H1 (cell line): ENCODE measurements at regions of chr4 and their contacts with region 1.

Region 1: DNA sequence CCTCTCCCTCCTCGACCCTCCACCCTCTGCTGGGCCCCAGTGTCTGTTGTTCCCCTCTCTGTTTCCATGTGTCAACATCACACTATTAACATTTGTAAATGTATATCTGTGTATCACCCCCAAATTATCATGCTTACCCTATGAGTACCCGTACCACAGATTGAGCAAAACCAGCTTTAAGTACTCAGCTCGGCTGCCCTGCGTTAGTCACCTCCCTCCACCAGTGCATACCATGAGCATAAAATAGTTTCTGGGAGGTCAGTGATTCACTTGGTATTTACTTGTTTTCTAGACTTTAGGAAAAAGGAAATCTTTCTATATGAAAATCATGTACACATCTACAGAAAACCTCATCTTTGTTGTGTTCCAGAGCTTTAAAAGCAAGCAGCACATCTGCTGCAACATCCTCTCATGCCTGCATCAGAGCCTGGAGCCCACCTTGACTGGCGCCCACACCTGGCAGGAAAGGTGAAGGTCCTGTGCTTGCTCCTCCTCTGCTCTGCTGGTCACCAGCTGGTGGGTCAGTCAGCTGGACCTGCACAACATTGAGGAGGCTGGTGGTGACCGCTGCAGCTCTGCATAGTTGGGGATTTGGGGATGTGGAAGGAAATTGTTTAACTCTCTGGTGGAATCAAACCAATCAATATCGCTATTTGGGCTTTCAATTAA is 214.4 kb upstream of the KLF3 start:
- DNase-seq: no peak
- H3K4me3 ChIP-seq: no peak overlapping the region
- H3K27ac ChIP-seq: no peak overlapping the region
- H3K4me1 ChIP-seq: no peaks in the 10 kb centered on the region
- H3K27me3 ChIP-seq: no peaks in the 10 kb centered on the region
- CTCF ChIP-seq: peak; percentile 46 to 75 (median 69)
- EP300 ChIP-seq: no peak
- POLR2A ChIP-seq: no peak
- RAD21 ChIP-seq: peak; percentile 44 to 63

Region 2: DNA sequence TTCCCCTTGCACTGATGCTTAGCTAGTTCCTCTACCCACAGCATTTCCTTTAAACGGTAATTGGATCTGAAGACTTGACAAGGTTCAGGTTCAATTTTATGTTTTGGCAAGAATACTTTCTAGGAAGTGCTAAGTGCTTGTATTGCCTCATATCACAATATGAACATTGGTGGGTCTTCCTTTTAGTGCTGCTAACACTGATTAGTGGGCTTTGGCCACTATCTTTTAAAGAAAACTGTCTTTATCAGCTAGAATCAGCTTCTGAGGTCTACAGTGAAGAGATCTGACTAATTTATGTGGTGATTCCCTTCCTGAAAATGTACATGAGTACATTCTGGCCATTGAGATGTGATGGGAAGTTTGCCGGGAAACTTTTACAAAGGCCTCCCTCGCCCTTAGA is 102.4 kb before region 1 on chr4:
- CTCF ChIA-PET with region 1: no interaction called
- POLR2A ChIA-PET with region 1: no interaction called
- DNase-seq: no peak
- H3K4me3 ChIP-seq: no peak overlapping the region
- H3K27ac ChIP-seq: no peak overlapping the region
- H3K4me1 ChIP-seq: no peaks in the 10 kb centered on the region
- H3K27me3 ChIP-seq: no peaks in the 10 kb centered on the region
- CTCF ChIP-seq: no peak
- EP300 ChIP-seq: no peak
- POLR2A ChIP-seq: no peak
- RAD21 ChIP-seq: no peak

Region 3: GRCh38 chr4:38461342-38461741 is 11.7 kb after region 1 on chr4:
- CTCF ChIA-PET with region 1: interaction called, 10 read pairs
- POLR2A ChIA-PET with region 1: no interaction called
- DNase-seq: no peak
- H3K4me3 ChIP-seq: no peak overlapping the region
- H3K27ac ChIP-seq: no peak overlapping the region
- H3K4me1 ChIP-seq: no peaks in the 10 kb centered on the region; a peak in 1 of 7 replicates
- H3K27me3 ChIP-seq: no peaks in the 10 kb centered on the region
- CTCF ChIP-seq: no peak
- EP300 ChIP-seq: no peak
- POLR2A ChIP-seq: no peak
- RAD21 ChIP-seq: no peak